ENCODE measurements at regions of chr1 and their contacts with region 1.

Region 1: GRCh38 chr1:21117597-21118001 is 59.1 kb downstream of the EIF4G3 start:
- DNase-seq: no peak
- H3K4me3 ChIP-seq: no peak overlapping the region
- H3K27ac ChIP-seq: no peak overlapping the region
- H3K27me3 ChIP-seq: no peaks in the 10 kb centered on the region
- CTCF ChIP-seq: no peak

Region 2: DNA sequence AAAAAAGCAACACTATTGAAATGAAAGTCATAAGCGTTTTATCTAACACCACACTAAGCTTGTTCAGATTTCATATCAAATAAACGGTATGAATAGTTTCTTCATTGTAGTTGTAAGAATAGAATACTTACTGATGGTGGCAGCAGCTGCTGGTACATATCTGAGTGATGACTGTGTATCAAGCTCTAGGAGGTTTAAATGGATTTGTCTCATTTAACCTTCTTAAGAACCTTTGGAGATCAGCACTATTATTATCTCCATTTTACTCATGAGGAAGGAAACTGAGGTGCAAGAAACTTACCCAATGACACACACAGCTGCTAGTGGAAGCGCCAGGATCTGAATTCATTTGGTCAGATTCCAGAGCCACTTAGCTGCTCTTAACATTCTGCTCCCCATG is 44.9 kb before region 1 on chr1:
- CTCF ChIA-PET with region 1: no interaction called
- POLR2A ChIA-PET with region 1: interaction called, 11 read pairs
- DNase-seq: no peak
- H3K4me3 ChIP-seq: no peak overlapping the region
- H3K27ac ChIP-seq: no peak overlapping the region
- H3K27me3 ChIP-seq: no peaks in the 10 kb centered on the region
- CTCF ChIP-seq: no peak

Region 3: GRCh38 chr1:21082073-21082472 is 35.5 kb before region 1 on chr1:
- CTCF ChIA-PET with region 1: no interaction called
- POLR2A ChIA-PET with region 1: interaction called, 10 read pairs
- DNase-seq: no peak
- H3K4me3 ChIP-seq: no peak overlapping the region
- H3K27ac ChIP-seq: no peak overlapping the region
- H3K27me3 ChIP-seq: no peaks in the 10 kb centered on the region
- CTCF ChIP-seq: no peak

Region 4: GRCh38 chr1:21139601-21140000 is 22.0 kb after region 1 on chr1:
- CTCF ChIA-PET with region 1: no interaction called
- POLR2A ChIA-PET with region 1: no interaction called
- DNase-seq: no peak
- H3K4me3 ChIP-seq: no peak overlapping the region
- H3K27ac ChIP-seq: no peak overlapping the region
- H3K27me3 ChIP-seq: no peaks in the 10 kb centered on the region
- CTCF ChIP-seq: no peak

Region 5: GRCh38 chr1:21165646-21166045 is 48.0 kb after region 1 on chr1:
- CTCF ChIA-PET with region 1: no interaction called
- POLR2A ChIA-PET with region 1: no interaction called
- DNase-seq: no peak
- H3K4me3 ChIP-seq: no peak overlapping the region
- H3K27ac ChIP-seq: no peak overlapping the region
- H3K27me3 ChIP-seq: no peaks in the 10 kb centered on the region
- CTCF ChIP-seq: no peak